ENCODE measurements at regions of chr17 and their contacts with region 1.

Region 1: DNA sequence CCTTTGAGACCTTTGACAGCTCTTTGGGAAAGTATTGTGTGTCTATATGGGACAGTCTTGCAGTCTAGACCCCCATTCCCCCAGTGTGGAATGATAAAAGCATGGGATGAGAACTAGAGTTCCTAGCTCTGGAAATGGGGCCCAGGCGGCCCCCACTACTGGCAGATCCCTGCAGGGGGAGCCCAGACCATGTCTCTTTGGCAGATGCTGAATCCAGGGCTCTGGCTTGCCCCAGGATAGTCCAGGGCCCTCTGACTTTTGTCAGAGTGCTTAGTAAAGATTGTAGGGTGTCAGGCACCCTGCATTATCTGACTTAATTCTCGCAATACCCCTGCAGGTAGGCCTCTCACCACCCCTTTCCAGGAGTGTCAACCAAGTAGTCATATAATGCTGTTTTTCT is 8.3 kb downstream of the ALKBH5 start:
- DNase-seq: peak; percentile 38
- ATAC-seq: peak; percentile 86
- H3K4me3 Mint-ChIP-seq: no peak overlapping the region
- H3K27ac Mint-ChIP-seq: no peak overlapping the region
- H3K4me1 Mint-ChIP-seq: peaks cover 22% of the 10 kb centered on the region
- H3K27me3 Mint-ChIP-seq: no peaks in the 10 kb centered on the region
- CTCF ChIP-seq: no peak

Region 2: GRCh38 chr17:17890773-17891759 is 300.9 kb before region 1 on chr17:
- CTCF ChIA-PET with region 1: no interaction called
- POLR2A ChIA-PET with region 1: no interaction called
- DNase-seq: peak; percentile 70
- ATAC-seq: peak; percentile 84
- H3K4me3 Mint-ChIP-seq: no peak overlapping the region
- H3K27ac Mint-ChIP-seq: peak overlapping the region; percentile 71; the same call in 1 of the 2 replicates
- H3K4me1 Mint-ChIP-seq: peaks cover 32% of the 10 kb centered on the region
- H3K27me3 Mint-ChIP-seq: no peaks in the 10 kb centered on the region
- CTCF ChIP-seq: peak; percentile 59

Region 3: GRCh38 chr17:17972126-17972951 is 219.6 kb before region 1 on chr17 and contains the starts of genes DRC3 and TOM1L2:
- CTCF ChIA-PET with region 1: no interaction called
- POLR2A ChIA-PET with region 1: no interaction called
- DNase-seq: peak; percentile 100
- ATAC-seq: peak; percentile 97
- H3K4me3 Mint-ChIP-seq: peak within 1 kb of the TSS; percentile 91
- H3K27ac Mint-ChIP-seq: no peak within 1 kb of the TSS; the same call in 1 of the 2 replicates
- H3K4me1 Mint-ChIP-seq: 0 out of 2 replicates have a peak, but pooled peaks cover 6% of the 10 kb centered on the region
- H3K27me3 Mint-ChIP-seq: no peaks in the 10 kb centered on the region; the same call in 1 of the 2 replicates
- CTCF ChIP-seq: no peak
- total RNA-seq, gene DRC3: 0.34 to 0.48 TPM (median 0.42 TPM) in 3 replicates
- total RNA-seq, gene TOM1L2: 5.2 to 6.7 TPM (median 6.4 TPM) in 3 replicates

Region 4: GRCh38 chr17:18158022-18158600 is 33.9 kb before region 1 on chr17:
- CTCF ChIA-PET with region 1: interaction called, 10 read pairs
- POLR2A ChIA-PET with region 1: no interaction called
- DNase-seq: peak; percentile 99
- ATAC-seq: peak; percentile 79
- H3K4me3 Mint-ChIP-seq: peak overlapping the region; percentile 83
- H3K27ac Mint-ChIP-seq: peak overlapping the region; percentile 96
- H3K4me1 Mint-ChIP-seq: peaks cover 7% of the 10 kb centered on the region
- H3K27me3 Mint-ChIP-seq: no peaks in the 10 kb centered on the region; the same call in 1 of the 2 replicates
- CTCF ChIP-seq: no peak

Region 5: GRCh38 chr17:18176176-18176575 is 15.8 kb before region 1 on chr17:
- CTCF ChIA-PET with region 1: no interaction called
- POLR2A ChIA-PET with region 1: no interaction called
- DNase-seq: no peak
- ATAC-seq: no peak
- H3K4me3 Mint-ChIP-seq: no peak overlapping the region
- H3K27ac Mint-ChIP-seq: no peak overlapping the region
- H3K4me1 Mint-ChIP-seq: peaks cover 7% of the 10 kb centered on the region; the same call in 1 of the 2 replicates
- H3K27me3 Mint-ChIP-seq: 0 out of 2 replicates have a peak, but pooled peaks cover 3% of the 10 kb centered on the region
- CTCF ChIP-seq: no peak